Heart right ventricle (tissue), 16 donors: ENCODE measurements at regions of chr16 and their contacts with region 1.

Region 1: DNA sequence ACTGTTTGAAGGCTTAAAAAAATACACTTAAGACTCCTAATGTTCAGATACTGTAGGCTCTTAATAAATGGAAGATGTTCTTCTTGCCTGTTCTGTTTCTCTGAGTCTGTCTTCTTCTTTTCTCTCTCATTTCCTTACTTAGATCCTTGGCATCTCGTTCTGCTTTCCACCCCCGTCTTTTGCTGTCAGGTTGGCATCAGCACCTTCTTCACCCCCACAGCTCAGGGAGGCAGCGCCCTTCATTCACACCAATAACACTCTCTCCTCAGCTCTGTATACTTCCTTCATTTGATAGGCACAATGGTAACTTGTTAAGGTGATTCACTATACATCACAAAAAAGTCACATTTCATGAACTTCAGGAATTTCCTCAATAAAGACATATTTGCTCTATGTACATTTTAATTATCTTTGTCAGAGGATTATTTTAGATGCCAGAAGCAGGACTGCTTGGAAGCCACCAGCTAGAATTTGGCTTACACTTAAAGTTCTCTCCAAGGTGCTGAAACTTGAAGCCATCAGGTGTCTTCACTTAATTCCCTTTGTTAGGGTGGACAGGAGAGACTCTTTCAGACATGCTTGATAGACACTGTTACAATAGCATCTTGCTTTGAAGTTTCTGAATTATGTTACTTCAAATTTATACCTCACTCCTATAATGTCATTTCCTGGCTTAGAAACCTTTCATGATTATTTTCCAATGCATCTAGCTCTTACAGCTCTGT is 670.1 kb upstream of the C16orf82 start:
- DNase-seq: no peak
- ATAC-seq: no peak
- H3K4me3 ChIP-seq: no peak overlapping the region
- H3K27ac ChIP-seq: no peak overlapping the region
- H3K4me1 ChIP-seq: no peaks in the 10 kb centered on the region
- H3K27me3 ChIP-seq: no peaks in the 10 kb centered on the region
- CTCF ChIP-seq: no peak

Region 2: DNA sequence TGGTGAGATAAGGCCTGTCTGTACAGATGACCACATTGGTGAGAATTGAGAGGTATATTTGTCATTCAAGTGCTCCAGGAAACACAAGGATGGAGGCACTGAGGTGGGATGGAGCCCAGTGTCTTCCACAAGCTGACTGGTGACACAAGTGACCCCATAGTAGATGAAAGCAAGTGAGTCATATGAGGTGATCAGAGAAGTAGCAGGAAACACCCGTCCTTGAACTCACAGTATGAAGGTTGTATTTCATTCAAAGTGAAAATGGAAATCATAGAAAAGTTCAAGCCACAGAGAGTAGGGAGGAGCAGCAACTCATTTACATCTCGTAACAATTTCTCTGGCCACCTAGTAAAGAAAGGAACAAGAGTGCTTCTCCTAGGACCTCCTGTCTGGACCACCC is 95.2 kb before region 1 on chr16:
- intact Hi-C with region 1: loop called in 1 of 10 experiments (anchors 10 kb)
- DNase-seq: no peak
- ATAC-seq: no peak
- H3K4me3 ChIP-seq: no peak overlapping the region
- H3K27ac ChIP-seq: no peak overlapping the region
- H3K4me1 ChIP-seq: no peaks in the 10 kb centered on the region
- H3K27me3 ChIP-seq: no peaks in the 10 kb centered on the region
- CTCF ChIP-seq: no peak